ENCODE measurements at regions of chr11 and their contacts with region 1.

Region 1: GRCh38 chr11:18650859-18651557 is 16.9 kb upstream of the SPTY2D1 start:
- DNase-seq: no peak
- H3K4me3 ChIP-seq: no peak overlapping the region
- H3K27me3 ChIP-seq: no peaks in the 10 kb centered on the region
- CTCF ChIP-seq: peak; percentile 62

Region 2: DNA sequence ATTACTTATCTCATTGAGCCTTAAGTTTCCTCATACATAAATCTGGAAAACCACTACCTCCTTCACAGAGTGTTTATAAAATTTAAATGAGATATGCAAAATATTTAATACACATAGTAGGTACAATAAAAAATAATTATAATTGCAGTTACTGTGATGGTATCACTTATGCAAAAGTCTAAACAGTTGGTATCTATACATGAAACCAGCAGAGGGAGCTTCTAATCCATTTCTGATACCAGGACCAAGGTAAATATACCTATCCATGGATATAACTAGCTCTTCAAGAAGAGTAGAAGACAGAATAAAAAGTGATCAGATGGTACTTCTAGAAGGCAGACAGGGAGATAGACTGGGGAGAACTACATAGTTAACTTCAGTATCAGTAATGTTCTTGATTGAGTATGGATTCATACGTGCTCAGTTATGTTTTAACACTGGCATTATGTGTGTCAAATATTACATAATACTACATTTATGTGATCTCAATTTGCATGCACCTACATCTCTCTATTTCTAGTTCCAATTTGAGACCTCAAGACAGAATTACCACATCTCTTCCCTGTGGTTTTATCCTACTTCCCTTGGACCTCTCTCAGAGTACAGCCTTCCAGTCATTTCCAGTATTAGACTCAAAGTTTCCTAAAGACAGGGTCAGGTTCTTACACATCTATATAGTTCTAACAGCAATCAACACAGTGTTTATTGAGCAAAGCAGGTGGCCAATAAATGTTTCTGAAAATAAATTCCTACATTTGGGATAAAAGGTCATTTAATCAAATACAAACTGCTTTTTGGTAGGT is 110.6 kb before region 1 on chr11:
- CTCF ChIA-PET with region 1: interaction called, 10 read pairs
- POLR2A ChIA-PET with region 1: no interaction called
- DNase-seq: no peak
- H3K4me3 ChIP-seq: no peak overlapping the region
- H3K27me3 ChIP-seq: no peaks in the 10 kb centered on the region
- CTCF ChIP-seq: peak; percentile 39

Measured in BJ (cell line).